Activated T-helper 1 cell treated with anti-CD3 and anti-CD28 coated beads, Interleukin-12 subunit alpha, Interleukin-12 subunit beta, Interleukin-2, Interleukin-4 antibody, amounts not matched to agents 30 ng/mL and 10 ng/mL and 1 ng/mL, durations not matched to agents 14 hours and 24 hours and 36 hours (primary cell): ENCODE measurements at regions of chr19 and their contacts with region 1.

Region 1: DNA sequence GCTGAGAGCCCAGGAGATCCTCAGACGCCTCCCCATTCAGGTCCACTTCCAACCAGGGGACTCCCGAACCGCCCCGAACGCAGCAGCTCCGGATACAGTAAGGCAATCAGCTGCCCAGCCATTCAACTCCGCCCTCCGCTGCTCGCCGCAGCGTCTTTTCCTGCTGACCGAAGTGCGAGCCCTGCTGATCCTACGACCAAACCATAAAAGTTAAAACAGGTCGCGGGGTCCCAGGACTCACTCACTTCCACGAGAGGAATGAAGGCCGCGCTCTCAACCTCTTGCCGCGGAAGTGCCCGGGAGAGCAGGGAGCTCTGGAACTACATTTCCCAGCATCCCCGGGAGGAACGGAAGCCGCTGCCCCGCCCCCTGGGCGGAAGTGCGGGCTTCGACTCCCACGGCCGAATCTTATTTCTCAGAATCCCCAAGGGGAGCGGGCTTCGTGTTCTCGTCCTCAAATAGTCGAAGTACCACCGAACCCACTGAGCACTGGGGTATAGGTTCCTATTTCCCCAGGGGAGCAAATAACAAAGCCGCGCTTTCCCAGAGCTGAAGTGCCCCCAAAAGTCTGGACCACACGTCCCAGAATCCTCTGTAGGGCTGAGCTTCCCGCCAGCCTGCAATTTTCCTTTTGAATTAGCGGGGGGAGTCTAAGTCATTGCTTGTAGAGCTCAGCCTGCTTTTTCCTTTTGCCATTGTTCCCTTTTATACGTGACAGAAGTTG is at the start of gene ZNF45:
- DNase-seq: peak; percentile 81
- H3K4me3 Mint-ChIP-seq: peak within 1 kb of the TSS; percentile 95
- H3K27ac Mint-ChIP-seq: peak within 1 kb of the TSS; percentile 83
- H3K4me1 Mint-ChIP-seq: peaks cover 20% of the 10 kb centered on the region
- H3K27me3 Mint-ChIP-seq: no peaks in the 10 kb centered on the region
- total RNA-seq, gene ZNF45: 11.5 and 13.1 TPM in 2 replicates

Region 2: DNA sequence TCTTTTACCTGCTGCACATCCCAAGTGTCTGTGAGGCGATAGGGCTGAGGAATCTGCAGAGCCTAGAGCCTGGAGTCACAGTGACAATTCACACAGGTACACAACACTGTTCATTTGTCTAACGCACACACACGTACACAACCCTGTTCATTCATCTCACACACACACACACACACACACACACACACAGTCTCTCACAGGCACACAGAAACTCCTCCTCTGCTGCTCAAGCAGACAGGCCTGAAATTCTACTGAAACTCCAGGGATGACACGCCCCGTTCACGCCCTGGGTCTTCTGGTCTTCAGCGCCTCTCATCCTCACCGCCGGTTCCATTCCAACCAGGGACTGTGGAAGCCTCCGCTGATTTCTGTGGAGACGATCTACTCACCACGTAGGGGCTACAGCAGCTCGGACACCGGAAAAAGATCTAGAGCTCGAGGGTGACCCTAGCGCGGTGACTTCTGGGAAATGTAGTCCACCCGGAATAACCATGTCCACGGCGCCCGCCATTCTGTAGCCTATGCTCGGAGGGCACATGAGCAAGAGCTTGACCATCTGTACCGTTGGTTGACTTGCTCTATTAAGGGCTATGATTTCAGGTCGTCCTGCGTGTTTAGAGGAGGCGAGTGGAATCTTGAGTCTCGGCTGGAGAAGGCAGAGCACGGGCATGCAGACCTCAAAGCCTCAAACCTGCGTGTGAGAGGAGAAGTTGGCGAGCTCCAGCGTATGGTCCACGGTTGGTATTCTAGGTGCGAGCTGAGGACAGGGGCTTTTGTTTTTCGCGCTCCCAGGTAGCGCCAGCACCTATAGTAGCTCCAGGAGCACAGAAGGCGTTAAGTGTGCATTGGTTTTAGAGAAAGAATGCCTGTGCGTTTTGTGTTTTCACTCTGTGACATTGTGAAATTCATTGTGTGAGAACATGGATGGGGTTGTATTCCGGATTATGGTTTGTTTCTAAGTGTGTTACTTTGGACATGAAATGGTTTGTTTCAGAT is 33.5 kb before region 1 on chr19:
- intact Hi-C with region 1: loop called (anchors 1 kb)
- DNase-seq: peak; percentile 54
- H3K4me3 Mint-ChIP-seq: peak overlapping the region; percentile 81
- H3K27ac Mint-ChIP-seq: peak overlapping the region; percentile 20
- H3K4me1 Mint-ChIP-seq: peaks cover 15% of the 10 kb centered on the region
- H3K27me3 Mint-ChIP-seq: no peaks in the 10 kb centered on the region

Region 3: GRCh38 chr19:43983912-43984686 is 49.0 kb after region 1 on chr19 and contains the start of gene ZNF155:
- intact Hi-C with region 1: loop called (anchors 1 kb)
- DNase-seq: peak; percentile 56
- H3K4me3 Mint-ChIP-seq: peak within 1 kb of the TSS; percentile 94
- H3K27ac Mint-ChIP-seq: peak within 1 kb of the TSS; percentile 88
- H3K4me1 Mint-ChIP-seq: peaks cover 8% of the 10 kb centered on the region
- H3K27me3 Mint-ChIP-seq: no peaks in the 10 kb centered on the region
- total RNA-seq, gene ZNF155: 5.2 and 6.5 TPM in 2 replicates

Region 4: GRCh38 chr19:44113138-44113783 is 178.1 kb after region 1 on chr19 and contains the start of gene ZNF225:
- intact Hi-C with region 1: loop called (anchors 2 kb)
- DNase-seq: peak; percentile 81
- H3K4me3 Mint-ChIP-seq: peak within 1 kb of the TSS; percentile 100
- H3K27ac Mint-ChIP-seq: peak within 1 kb of the TSS; percentile 88
- H3K4me1 Mint-ChIP-seq: peaks cover 30% of the 10 kb centered on the region
- H3K27me3 Mint-ChIP-seq: no peaks in the 10 kb centered on the region
- total RNA-seq, gene ZNF225: 3.8 and 5.0 TPM in 2 replicates

Region 5: DNA sequence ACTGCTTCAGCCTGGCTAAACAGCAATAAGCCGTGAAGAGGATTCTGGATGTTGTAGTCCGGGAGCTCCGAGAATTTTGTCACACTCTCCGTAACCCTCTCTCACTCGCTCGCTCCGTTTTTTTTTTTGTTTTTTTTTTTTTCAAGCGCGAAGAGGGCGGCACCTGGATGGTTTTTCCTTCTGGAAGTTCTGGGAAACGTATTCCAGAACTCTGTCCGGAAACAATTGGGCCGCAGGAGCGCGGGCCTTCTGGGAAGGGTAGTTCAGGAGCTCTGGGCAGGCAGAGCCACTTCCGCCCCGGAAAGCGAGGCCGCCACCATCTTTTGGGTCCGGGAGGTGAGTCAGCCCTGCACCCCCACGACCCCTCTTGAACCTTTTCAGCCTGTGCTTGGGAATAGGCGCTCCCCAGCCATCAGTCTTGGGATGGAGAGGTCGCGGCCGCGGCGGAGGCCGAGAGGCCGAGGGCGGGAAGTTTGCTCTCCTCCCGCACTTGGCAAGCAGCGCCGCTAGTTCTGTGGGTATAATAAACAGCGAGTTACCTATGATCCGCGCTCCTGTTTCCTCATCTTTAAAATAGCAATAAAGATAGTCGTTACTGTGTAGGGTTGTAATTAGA is 277.2 kb after region 1 on chr19 and contains the start of gene ZNF227:
- intact Hi-C with region 1: loop called (anchors 1 kb)
- DNase-seq: peak; percentile 70
- H3K4me3 Mint-ChIP-seq: peak within 1 kb of the TSS; percentile 89
- H3K27ac Mint-ChIP-seq: peak within 1 kb of the TSS; percentile 79
- H3K4me1 Mint-ChIP-seq: peaks cover 27% of the 10 kb centered on the region
- H3K27me3 Mint-ChIP-seq: no peaks in the 10 kb centered on the region
- total RNA-seq, gene ZNF227: 21.7 and 22.6 TPM in 2 replicates